Activated CD8-positive, alpha-beta T cell treated with anti-CD3 and anti-CD28 coated beads for 36 hours (primary cell): ENCODE measurements at regions of chr9 and their contacts with region 1.

Region 1: DNA sequence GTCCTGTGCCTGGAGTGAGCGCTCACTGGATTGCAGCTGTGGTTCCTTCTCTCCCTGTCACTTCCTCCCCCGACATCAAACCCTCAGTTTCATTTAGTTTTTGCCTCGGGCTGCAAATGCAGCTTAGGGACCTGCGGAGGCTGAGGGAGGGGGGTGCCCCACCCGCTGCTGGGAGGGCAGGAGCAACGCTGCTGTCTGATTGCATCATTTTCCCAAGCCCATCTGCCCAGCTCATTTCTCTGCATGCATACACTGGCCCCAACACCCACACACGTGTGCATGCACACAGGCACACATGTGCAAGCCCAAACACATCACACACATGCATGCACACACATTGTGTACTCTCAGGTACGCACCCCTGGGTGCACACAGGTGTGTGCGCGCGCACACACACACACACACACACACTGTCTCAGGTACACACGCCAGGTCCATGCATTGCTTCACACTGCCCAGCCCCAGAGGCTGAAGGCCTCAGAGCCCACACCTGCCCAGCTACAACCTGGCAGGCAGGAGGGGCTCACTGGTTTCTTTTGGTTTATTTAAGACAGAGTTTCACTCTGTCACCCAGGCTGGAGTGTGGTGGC is 3.4 kb downstream of the ASS1 start:
- DNase-seq: peak; percentile 59
- ATAC-seq: peak; percentile 43
- H3K4me3 Mint-ChIP-seq: no peak overlapping the region
- H3K27ac Mint-ChIP-seq: peak overlapping the region; percentile 80
- H3K4me1 Mint-ChIP-seq: peaks cover 12% of the 10 kb centered on the region
- H3K27me3 Mint-ChIP-seq: peaks cover 41% of the 10 kb centered on the region
- CTCF ChIP-seq: no peak

Region 2: DNA sequence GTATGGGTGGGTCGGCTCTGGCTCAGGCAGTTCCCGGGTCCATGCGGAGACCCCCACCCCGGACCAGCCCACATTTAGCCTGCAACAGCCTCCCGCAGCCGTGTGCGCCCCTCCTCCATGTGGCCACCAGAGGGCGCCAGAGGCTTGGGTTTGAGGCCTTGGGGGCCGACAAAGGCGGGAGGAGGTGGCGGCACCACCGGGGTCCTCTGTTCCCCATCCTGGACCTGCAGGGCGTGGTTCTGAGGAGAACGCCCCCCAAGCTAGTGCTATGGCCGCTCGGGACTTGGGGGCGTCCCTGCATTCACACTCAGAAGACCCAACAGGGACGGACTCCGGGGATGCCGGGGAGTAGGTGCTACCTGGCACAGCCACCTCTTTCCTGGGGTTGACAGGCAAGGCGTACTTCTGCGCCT is 13.1 kb after region 1 on chr9:
- CTCF ChIA-PET with region 1: interaction called, 12 read pairs
- POLR2A ChIA-PET with region 1: interaction called, 4 read pairs
- intact Hi-C with region 1: no loop called
- DNase-seq: peak; percentile 79
- ATAC-seq: peak; percentile 85
- H3K4me3 Mint-ChIP-seq: no peak overlapping the region
- H3K27ac Mint-ChIP-seq: no peak overlapping the region
- H3K4me1 Mint-ChIP-seq: no peaks in the 10 kb centered on the region
- H3K27me3 Mint-ChIP-seq: peaks cover 15% of the 10 kb centered on the region
- CTCF ChIP-seq: peak; percentile 95

Region 3: GRCh38 chr9:130523921-130524320 is 75.8 kb after region 1 on chr9:
- CTCF ChIA-PET with region 1: no interaction called
- POLR2A ChIA-PET with region 1: no interaction called
- intact Hi-C with region 1: no loop called
- DNase-seq: no peak
- ATAC-seq: no peak
- H3K4me3 Mint-ChIP-seq: no peak overlapping the region
- H3K27ac Mint-ChIP-seq: no peak overlapping the region
- H3K4me1 Mint-ChIP-seq: peaks cover 4% of the 10 kb centered on the region
- H3K27me3 Mint-ChIP-seq: peaks cover 5% of the 10 kb centered on the region
- CTCF ChIP-seq: no peak